Right cardiac atrium (tissue), 5 donors: ENCODE measurements at regions of chr22 and their contacts with region 1.

Region 1: DNA sequence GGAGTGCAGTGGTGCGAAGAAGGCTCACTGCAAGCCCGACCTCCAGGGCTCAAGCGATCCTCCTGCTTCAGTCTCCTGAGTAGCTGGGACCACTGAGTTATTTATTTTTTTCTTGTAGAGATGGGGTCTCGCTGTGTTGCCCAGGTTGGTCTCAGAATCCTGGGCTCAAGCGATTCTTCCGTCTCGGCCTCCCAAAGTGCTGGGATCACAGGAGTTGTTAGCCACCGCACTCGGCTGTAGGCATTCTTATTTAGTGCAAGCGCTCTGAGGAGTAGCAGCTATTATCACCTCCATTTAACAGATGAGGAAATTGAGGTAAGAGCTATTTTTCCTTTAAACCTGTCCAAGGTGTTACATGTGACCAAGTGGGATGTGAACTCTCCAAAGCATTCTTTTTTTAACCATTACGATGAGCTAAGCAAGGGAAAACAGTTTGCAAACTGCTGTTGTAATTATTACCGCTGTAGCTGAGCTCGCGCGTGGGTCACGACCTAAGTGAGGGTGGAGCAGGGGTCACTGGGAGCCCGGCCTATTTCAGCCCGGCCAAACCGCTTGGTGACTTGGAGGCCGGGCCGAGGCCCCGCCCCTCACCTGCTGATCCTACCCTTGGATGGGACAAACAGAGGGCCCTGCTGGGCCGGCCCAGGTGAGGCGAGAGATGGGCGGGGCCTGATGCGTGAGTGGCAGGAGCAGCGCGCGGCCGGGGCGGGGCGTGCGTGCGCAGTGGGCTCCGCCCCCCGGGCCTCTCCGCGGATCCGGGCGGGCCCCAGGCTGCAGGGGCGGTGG is 449 bp upstream of the KREMEN1 start:
- DNase-seq: peak; percentile 84 to 95 (median 95)
- ATAC-seq: peak; percentile 94 to 95
- H3K4me3 ChIP-seq: peak overlapping the region; percentile 85
- H3K27ac ChIP-seq: no peak overlapping the region
- H3K4me1 ChIP-seq: peaks cover 2% of the 10 kb centered on the region
- H3K27me3 ChIP-seq: no peaks in the 10 kb centered on the region

Region 2: DNA sequence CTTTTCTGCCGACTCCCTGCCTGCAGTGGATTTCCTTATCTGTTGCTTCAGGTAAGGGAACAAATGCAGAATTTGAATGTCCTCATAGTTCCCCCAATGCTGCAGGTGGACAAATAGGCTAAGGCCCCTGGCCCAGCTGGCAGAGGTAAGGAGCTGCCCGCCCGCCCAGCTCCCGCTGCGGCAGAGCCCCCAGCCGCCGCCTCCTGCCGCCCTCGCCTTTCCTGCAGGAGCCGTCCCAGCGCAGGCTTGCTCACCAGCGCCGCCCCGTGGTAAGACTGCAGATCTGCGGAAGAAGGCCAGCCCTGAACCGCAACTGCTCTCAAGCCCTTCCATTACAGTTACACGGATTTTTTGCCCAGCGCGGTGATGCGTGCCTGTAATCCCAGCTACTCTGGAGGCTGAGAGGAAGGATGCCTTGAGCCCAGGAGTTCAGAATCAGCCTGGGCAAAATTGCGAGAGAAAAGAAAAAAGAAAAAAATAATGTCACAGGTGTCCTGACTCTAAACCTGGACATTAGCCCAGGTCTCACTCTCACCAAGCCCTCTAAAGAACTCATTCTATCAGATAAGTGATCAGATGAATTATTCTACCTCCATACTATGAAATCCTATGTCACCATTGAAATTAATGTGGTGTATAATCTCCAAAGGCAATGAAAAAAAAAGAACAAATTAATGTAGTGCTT is 82.1 kb after region 1 on chr22:
- intact Hi-C with region 1: loop called in 3 of 4 experiments (anchors 5 to 10 kb)
- DNase-seq: peak; percentile 74 to 92 (median 87)
- ATAC-seq: peak; percentile 69 to 70
- H3K4me3 ChIP-seq: peak overlapping the region; percentile 7
- H3K27ac ChIP-seq: no peak overlapping the region
- H3K4me1 ChIP-seq: peaks cover 5% of the 10 kb centered on the region
- H3K27me3 ChIP-seq: no peaks in the 10 kb centered on the region